Psoas muscle (tissue), 8 donors: ENCODE measurements at regions of chr9 and their contacts with region 1.

Region 1: GRCh38 chr9:123069010-123069481 is 35.6 kb downstream of the GPR21 start:
- DNase-seq: no peak
- ATAC-seq: no peak
- H3K4me3 ChIP-seq: no peak overlapping the region
- H3K27ac ChIP-seq: no peak overlapping the region
- H3K4me1 ChIP-seq: no peaks in the 10 kb centered on the region
- H3K27me3 ChIP-seq: no peaks in the 10 kb centered on the region
- CTCF ChIP-seq: no peak

Region 2: GRCh38 chr9:123120131-123120530 is 51.1 kb after region 1 on chr9:
- intact Hi-C with region 1: loop called in 1 of 2 experiments (anchors 10 kb)
- DNase-seq: no peak
- ATAC-seq: no peak
- H3K4me3 ChIP-seq: no peak overlapping the region
- H3K27ac ChIP-seq: no peak overlapping the region
- H3K4me1 ChIP-seq: peaks cover 8% of the 10 kb centered on the region
- H3K27me3 ChIP-seq: no peaks in the 10 kb centered on the region
- CTCF ChIP-seq: no peak